ENCODE measurements at regions of chr7 and their contacts with region 1.

Region 1: DNA sequence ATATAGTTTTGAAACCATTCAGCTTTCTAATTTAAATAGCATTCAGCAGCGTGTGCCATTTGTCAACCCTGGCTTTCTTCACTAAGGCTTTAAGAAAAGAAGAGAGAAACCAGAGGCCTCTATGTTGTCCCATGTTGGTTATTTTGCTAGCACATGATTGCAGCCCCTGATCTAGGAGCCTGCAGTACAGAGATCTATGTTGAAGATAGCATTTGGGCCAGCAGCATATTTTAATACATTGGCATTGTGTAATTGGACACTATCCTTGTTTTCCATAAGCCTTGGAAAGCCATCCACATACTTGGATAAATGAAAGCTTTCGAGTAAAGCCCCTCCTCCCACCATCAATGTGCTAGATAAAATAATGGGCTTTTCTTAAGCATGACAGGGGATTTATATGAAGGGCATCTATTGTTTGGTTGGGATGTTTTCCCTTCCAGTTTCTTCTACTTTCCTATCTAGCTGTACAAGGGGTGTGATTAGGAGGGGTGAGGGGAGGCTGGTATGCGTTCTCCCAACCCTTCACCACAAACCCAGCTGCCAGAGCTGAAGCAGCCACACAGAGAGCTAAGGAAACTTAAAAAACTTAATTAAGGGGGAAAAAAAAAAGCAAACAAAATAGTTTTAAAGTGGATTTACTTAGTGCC is 23.1 kb upstream of the SDHAF3 start:
- DNase-seq: no peak
- ATAC-seq: no peak
- H3K4me3 ChIP-seq: no peak overlapping the region
- H3K4me3 Mint-ChIP-seq: no peak overlapping the region
- H3K27ac ChIP-seq: no peak overlapping the region
- H3K27ac Mint-ChIP-seq: no peak overlapping the region
- H3K4me1 ChIP-seq: no peaks in the 10 kb centered on the region
- H3K4me1 Mint-ChIP-seq: no peaks in the 10 kb centered on the region
- H3K27me3 ChIP-seq: no peaks in the 10 kb centered on the region
- H3K27me3 Mint-ChIP-seq: peaks cover 24% of the 10 kb centered on the region
- CTCF ChIP-seq: no peak

Region 2: DNA sequence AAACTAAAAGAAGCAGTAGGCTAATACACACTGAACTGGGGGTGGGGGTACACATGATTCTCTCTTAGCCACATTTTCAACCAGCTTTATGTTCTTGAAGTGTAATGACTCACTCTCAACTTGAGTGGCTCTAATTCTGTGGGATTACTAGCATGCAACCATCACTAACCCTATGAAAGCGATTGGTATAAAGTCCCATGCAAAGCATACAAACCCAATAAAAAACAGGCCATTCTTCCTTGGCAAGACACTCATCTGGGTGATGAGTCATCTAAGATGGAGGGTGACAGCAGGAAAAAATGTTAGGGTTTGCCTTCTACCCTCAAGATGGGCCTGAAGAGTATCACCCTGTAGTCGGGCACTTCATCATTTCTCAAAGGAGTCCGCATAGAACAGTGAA is 1683.4 kb before region 1 on chr7:
- CTCF ChIA-PET with region 1: no interaction called
- POLR2A ChIA-PET with region 1: interaction called, 10 read pairs
- intact Hi-C with region 1: no loop called
- DNase-seq: no peak
- ATAC-seq: no peak
- H3K4me3 ChIP-seq: no peak overlapping the region
- H3K4me3 Mint-ChIP-seq: no peak overlapping the region
- H3K27ac ChIP-seq: no peak overlapping the region
- H3K27ac Mint-ChIP-seq: no peak overlapping the region
- H3K4me1 ChIP-seq: no peaks in the 10 kb centered on the region
- H3K4me1 Mint-ChIP-seq: no peaks in the 10 kb centered on the region
- H3K27me3 ChIP-seq: no peaks in the 10 kb centered on the region
- H3K27me3 Mint-ChIP-seq: no peaks in the 10 kb centered on the region
- CTCF ChIP-seq: no peak

Region 3: GRCh38 chr7:96747418-96747940 is 346.9 kb before region 1 on chr7:
- CTCF ChIA-PET with region 1: no interaction called
- POLR2A ChIA-PET with region 1: no interaction called
- intact Hi-C with region 1: no loop called
- DNase-seq: no peak
- ATAC-seq: no peak
- H3K4me3 ChIP-seq: no peak overlapping the region
- H3K4me3 Mint-ChIP-seq: no peak overlapping the region
- H3K27ac ChIP-seq: no peak overlapping the region
- H3K27ac Mint-ChIP-seq: no peak overlapping the region
- H3K4me1 ChIP-seq: no peaks in the 10 kb centered on the region
- H3K4me1 Mint-ChIP-seq: no peaks in the 10 kb centered on the region
- H3K27me3 ChIP-seq: no peaks in the 10 kb centered on the region
- H3K27me3 Mint-ChIP-seq: peaks cover 9% of the 10 kb centered on the region
- CTCF ChIP-seq: no peak

Region 4: DNA sequence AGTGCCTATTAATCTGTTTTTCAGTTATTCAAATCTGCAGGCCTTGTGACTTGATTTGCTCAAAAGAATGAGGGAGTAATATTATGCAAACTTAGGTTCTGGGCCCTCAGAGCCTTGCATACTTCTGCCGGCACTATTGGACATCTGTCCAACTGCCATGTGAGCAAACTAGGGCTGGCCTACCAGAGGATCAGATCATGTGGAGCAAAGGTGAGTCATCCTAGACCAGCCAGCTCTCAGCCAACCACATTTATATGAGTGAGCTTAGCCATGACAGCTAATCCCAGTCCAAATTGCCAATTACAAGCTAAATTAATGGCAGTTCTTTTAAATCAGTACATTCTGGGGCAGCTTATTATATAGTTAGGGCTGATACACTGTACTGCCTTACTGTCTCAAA is 92.7 kb after region 1 on chr7:
- CTCF ChIA-PET with region 1: no interaction called
- POLR2A ChIA-PET with region 1: no interaction called
- intact Hi-C with region 1: no loop called
- DNase-seq: no peak
- ATAC-seq: no peak
- H3K4me3 ChIP-seq: no peak overlapping the region
- H3K4me3 Mint-ChIP-seq: no peak overlapping the region
- H3K27ac ChIP-seq: no peak overlapping the region
- H3K27ac Mint-ChIP-seq: no peak overlapping the region
- H3K4me1 ChIP-seq: no peaks in the 10 kb centered on the region
- H3K4me1 Mint-ChIP-seq: peaks cover 8% of the 10 kb centered on the region
- H3K27me3 ChIP-seq: peaks cover 0 to 5% (median 0%) of the 10 kb centered on the region in 4 experiments
- H3K27me3 Mint-ChIP-seq: no peaks in the 10 kb centered on the region
- CTCF ChIP-seq: no peak

Region 5: DNA sequence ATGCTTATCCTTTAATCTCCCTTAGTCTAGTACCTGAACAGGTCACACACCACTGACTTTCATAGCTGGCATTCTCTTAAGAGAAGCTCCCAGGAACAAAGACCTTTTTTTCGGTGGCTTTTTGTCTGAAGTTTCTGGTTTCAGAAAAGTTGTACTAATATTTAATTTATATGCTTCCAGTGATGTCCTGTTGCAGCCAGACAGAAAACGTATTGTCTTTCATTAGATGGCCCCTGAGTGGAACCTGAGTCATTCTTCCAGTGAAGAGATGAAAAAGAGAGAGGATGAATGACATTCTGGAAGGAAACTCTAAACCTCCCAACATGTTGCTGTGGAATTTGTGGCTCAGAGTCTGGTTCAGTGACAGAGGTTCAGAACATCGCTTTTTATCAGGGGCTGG is 362.6 kb after region 1 on chr7:
- CTCF ChIA-PET with region 1: no interaction called
- POLR2A ChIA-PET with region 1: no interaction called
- intact Hi-C with region 1: no loop called
- DNase-seq: no peak
- ATAC-seq: no peak
- H3K4me3 ChIP-seq: no peak overlapping the region
- H3K4me3 Mint-ChIP-seq: no peak overlapping the region
- H3K27ac ChIP-seq: no peak overlapping the region
- H3K27ac Mint-ChIP-seq: no peak overlapping the region
- H3K4me1 ChIP-seq: no peaks in the 10 kb centered on the region
- H3K4me1 Mint-ChIP-seq: no peaks in the 10 kb centered on the region
- H3K27me3 ChIP-seq: no peaks in the 10 kb centered on the region
- H3K27me3 Mint-ChIP-seq: no peaks in the 10 kb centered on the region
- CTCF ChIP-seq: no peak